MCF 10A (cell line): ENCODE measurements at regions of chr17 and their contacts with region 1.

Region 1: DNA sequence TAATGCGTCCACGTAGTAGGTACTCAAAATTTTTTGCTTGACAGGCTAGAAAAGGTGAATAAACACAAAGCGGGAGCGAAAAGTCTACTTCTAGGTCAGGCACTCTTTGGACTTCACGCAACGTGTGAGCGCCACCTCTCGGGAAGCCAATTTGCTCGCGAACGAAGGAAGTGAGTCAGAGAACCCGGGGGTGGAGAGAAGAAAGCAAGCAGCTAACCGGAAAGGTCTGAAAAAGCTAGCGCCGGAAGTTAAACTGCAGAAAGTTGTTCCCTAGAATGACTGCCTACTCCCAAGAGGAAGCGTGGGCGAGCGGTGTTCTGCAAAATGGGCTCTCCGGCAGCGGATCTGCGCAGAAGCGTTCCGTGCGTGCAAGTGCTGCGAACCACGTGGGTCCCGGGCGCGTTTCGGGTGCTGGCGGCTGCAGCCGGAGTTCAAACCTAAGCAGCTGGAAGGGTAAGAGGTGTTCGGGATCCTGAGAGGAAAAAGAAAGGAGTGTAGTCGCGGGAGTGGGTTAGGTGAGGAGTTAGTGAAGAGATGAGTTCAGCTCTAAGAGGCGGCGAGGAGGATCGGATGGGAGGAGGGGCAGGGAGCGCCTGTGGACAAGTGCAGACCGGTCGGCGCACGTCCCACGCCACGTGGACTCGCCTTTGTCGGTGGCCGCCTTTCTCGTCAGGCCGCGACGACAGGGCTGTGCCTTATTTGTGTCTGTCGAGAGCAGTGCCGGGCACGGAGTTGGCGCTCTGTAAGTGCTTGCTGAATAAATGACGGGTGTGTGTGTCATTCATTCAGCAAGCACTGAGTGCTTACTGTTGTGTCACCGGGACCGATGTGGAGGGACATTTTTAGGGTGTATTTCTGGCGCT is at the start of gene NME1:
- DNase-seq: peak; percentile 99
- H3K4me3 Mint-ChIP-seq: no peak within 1 kb of the TSS
- H3K27ac Mint-ChIP-seq: no peak within 1 kb of the TSS
- H3K4me1 Mint-ChIP-seq: no peaks in the 10 kb centered on the region
- H3K27me3 Mint-ChIP-seq: no peaks in the 10 kb centered on the region
- CTCF ChIP-seq: peak; percentile 70
- total RNA-seq, gene NME1: 268 and 324 TPM in 2 replicates

Region 2: GRCh38 chr17:50949989-50950881 is 203.2 kb before region 1 on chr17:
- CTCF ChIA-PET with region 1: interaction called, 4 read pairs
- POLR2A ChIA-PET with region 1: interaction called, 4 read pairs
- intact Hi-C with region 1: loop called (anchors 5 kb)
- DNase-seq: peak; percentile 92
- H3K4me3 Mint-ChIP-seq: peak overlapping the region; percentile 42
- H3K27ac Mint-ChIP-seq: peak overlapping the region; percentile 67
- H3K4me1 Mint-ChIP-seq: peaks cover 49% of the 10 kb centered on the region
- H3K27me3 Mint-ChIP-seq: no peaks in the 10 kb centered on the region
- CTCF ChIP-seq: peak; percentile 89

Region 3: GRCh38 chr17:51000835-51001638 is 152.4 kb before region 1 on chr17:
- CTCF ChIA-PET with region 1: interaction called, 83 read pairs
- POLR2A ChIA-PET with region 1: interaction called, 28 read pairs
- intact Hi-C with region 1: loop called (anchors 1 kb)
- DNase-seq: peak; percentile 69
- H3K4me3 Mint-ChIP-seq: no peak overlapping the region
- H3K27ac Mint-ChIP-seq: no peak overlapping the region
- H3K4me1 Mint-ChIP-seq: no peaks in the 10 kb centered on the region
- H3K27me3 Mint-ChIP-seq: no peaks in the 10 kb centered on the region
- CTCF ChIP-seq: peak; percentile 55

Region 4: GRCh38 chr17:51046514-51047384 is 106.7 kb before region 1 on chr17:
- CTCF ChIA-PET with region 1: interaction called, 16 read pairs
- POLR2A ChIA-PET with region 1: interaction called, 3 read pairs
- intact Hi-C with region 1: no loop called
- DNase-seq: no peak
- H3K4me3 Mint-ChIP-seq: no peak overlapping the region
- H3K27ac Mint-ChIP-seq: no peak overlapping the region
- H3K4me1 Mint-ChIP-seq: peaks cover 4% of the 10 kb centered on the region
- H3K27me3 Mint-ChIP-seq: no peaks in the 10 kb centered on the region
- CTCF ChIP-seq: no peak

Region 5: GRCh38 chr17:51166197-51166986 is 13.0 kb after region 1 on chr17 and contains the start of gene NME2:
- CTCF ChIA-PET with region 1: interaction called, 6 read pairs
- POLR2A ChIA-PET with region 1: interaction called, 58 read pairs
- intact Hi-C with region 1: no loop called
- DNase-seq: peak; percentile 91
- H3K4me3 Mint-ChIP-seq: peak within 1 kb of the TSS; percentile 99
- H3K27ac Mint-ChIP-seq: peak within 1 kb of the TSS; percentile 100
- H3K4me1 Mint-ChIP-seq: peaks cover 30% of the 10 kb centered on the region
- H3K27me3 Mint-ChIP-seq: no peaks in the 10 kb centered on the region
- CTCF ChIP-seq: no peak
- total RNA-seq, gene NME2: 1,004 and 1,033 TPM in 2 replicates

Region 6: DNA sequence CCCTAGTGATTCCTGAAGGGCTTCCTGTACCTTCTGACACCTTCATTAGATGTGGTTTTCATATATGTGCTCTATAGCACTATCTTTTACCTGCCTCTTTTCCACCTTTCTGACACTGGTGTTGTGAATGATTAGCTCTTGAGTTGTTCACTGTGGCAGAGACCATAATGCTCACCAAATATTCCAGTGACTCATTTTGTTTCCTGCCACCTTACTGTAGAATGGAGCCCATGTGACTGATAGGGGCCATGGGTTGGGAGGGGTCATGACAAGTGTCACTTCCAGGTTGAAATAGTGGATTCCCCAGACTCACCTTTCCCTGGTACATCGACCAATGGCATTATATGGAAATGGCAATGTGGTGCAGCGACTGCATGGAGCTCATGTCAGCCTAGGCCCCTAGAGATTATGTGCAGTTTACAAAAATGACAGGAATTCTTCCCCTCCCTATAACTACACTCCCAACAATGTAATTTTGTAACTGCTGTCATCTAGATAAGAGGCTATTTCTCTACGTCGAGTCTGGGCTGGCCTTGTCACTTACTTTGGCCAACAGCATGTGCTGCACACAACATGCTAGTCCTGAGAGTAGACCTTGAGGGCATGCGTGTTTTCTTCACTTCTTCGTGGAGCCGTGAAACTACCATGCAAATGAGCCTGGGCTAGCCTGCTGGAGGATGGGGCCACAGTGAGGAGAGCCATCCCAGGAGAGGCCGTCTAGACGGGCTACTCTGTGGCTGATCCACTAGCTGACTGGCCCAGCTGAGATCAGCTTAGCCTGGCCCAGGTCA is 595.5 kb after region 1 on chr17:
- CTCF ChIA-PET with region 1: no interaction called
- POLR2A ChIA-PET with region 1: no interaction called
- intact Hi-C with region 1: no loop called
- DNase-seq: no peak
- H3K4me3 Mint-ChIP-seq: no peak overlapping the region
- H3K27ac Mint-ChIP-seq: no peak overlapping the region
- H3K4me1 Mint-ChIP-seq: peaks cover 15% of the 10 kb centered on the region
- H3K27me3 Mint-ChIP-seq: no peaks in the 10 kb centered on the region
- CTCF ChIP-seq: no peak